Activated CD8-positive, alpha-beta T cell treated with anti-CD3 and anti-CD28 coated beads for 36 hours (primary cell): ENCODE measurements at regions of chr14 and their contacts with region 1.

Region 1: GRCh38 chr14:73728717-73729330 is 14.6 kb upstream of the PNMA1 start:
- DNase-seq: peak; percentile 91
- ATAC-seq: peak; percentile 89
- H3K4me3 Mint-ChIP-seq: no peak overlapping the region
- H3K27ac Mint-ChIP-seq: peak overlapping the region; percentile 75
- H3K4me1 Mint-ChIP-seq: peaks cover 28% of the 10 kb centered on the region
- H3K27me3 Mint-ChIP-seq: no peaks in the 10 kb centered on the region
- CTCF ChIP-seq: peak; percentile 93

Region 2: DNA sequence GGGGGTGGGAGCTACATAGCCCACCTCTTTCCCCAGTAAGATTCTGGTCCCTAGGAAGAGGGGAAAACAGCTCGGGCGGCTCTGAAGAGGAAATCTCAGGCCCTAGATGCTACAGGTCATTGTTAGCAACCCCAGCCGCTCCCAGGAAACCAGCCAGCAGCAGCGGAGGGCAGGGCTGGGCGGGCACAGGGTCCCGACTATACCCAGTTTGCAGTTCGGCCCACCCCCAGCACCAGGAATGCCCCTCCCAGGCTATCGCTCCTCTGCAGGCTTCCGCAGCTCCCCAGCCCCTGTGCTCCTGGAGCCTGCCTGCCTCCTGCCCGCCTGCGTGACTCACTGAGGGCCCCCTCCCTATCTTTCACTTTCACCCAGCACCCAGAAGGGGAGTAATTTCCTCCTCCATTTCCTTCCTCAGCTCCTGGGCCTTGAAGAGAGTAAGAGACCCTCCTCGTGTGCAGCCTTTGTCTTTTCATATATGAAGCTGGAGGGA is 12.6 kb after region 1 on chr14:
- CTCF ChIA-PET with region 1: interaction called, 102 read pairs
- POLR2A ChIA-PET with region 1: interaction called, 25 read pairs
- intact Hi-C with region 1: no loop called
- DNase-seq: peak; percentile 83
- ATAC-seq: peak; percentile 73
- H3K4me3 Mint-ChIP-seq: peak overlapping the region; percentile 74
- H3K27ac Mint-ChIP-seq: peak overlapping the region; percentile 98
- H3K4me1 Mint-ChIP-seq: peaks cover 71% of the 10 kb centered on the region
- H3K27me3 Mint-ChIP-seq: no peaks in the 10 kb centered on the region
- CTCF ChIP-seq: no peak

Region 3: GRCh38 chr14:73771848-73772638 is 43.2 kb after region 1 on chr14:
- CTCF ChIA-PET with region 1: interaction called, 14 read pairs
- POLR2A ChIA-PET with region 1: interaction called, 4 read pairs
- intact Hi-C with region 1: no loop called
- DNase-seq: peak; percentile 96
- ATAC-seq: peak; percentile 81
- H3K4me3 Mint-ChIP-seq: peak overlapping the region; percentile 41
- H3K27ac Mint-ChIP-seq: peak overlapping the region; percentile 92
- H3K4me1 Mint-ChIP-seq: peaks cover 73% of the 10 kb centered on the region
- H3K27me3 Mint-ChIP-seq: no peaks in the 10 kb centered on the region
- CTCF ChIP-seq: no peak

Region 4: DNA sequence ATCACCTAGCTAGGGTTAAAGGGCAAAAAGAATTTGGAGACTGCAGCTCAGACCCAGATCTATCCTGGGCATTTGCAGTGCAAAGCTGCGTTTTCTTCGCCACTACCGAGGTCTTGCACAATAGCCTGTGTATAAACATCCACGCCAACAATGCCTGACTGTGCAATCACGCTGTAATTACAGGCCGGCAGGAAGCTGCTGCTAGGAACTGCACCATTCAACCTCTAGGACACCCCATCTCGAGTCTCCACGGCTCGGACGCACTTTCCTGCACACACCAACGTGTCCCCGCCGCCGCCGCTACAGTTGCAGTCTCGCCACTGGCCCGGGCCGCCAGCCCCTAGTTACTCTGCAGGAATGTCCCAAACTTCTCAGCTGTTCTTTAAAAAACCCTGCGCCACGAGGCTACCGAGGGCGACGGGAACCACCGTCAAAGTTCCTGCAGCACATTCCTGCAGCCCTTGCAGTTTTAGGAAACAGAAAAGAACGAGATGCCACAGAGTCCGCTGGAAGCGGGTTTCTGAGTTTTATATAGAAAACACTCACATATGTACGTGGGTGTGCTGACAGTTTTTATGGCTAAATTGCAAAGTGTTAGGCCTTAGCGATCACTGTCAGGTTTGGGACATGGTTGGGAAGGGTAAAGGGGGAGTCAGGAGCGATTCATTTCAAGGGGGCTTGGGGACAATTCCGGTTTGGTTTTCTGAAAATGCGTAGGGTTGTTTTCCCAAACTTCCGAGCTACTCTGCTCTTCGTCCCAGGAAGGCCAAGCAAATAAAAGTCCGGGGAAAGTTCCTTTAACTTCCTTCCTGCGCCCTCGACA is 57.3 kb after region 1 on chr14:
- CTCF ChIA-PET with region 1: interaction called, 26 read pairs
- POLR2A ChIA-PET with region 1: interaction called, 4 read pairs
- intact Hi-C with region 1: no loop called
- DNase-seq: peak; percentile 81
- ATAC-seq: peak; percentile 54
- H3K4me3 Mint-ChIP-seq: peak overlapping the region; percentile 90
- H3K27ac Mint-ChIP-seq: peak overlapping the region; percentile 95
- H3K4me1 Mint-ChIP-seq: peaks cover 58% of the 10 kb centered on the region
- H3K27me3 Mint-ChIP-seq: no peaks in the 10 kb centered on the region
- CTCF ChIP-seq: peak; percentile 37

Region 5: GRCh38 chr14:73870525-73871235 is 141.9 kb after region 1 on chr14:
- CTCF ChIA-PET with region 1: interaction called, 21 read pairs
- POLR2A ChIA-PET with region 1: interaction called, 3 read pairs
- intact Hi-C with region 1: no loop called
- DNase-seq: no peak
- ATAC-seq: no peak
- H3K4me3 Mint-ChIP-seq: no peak overlapping the region
- H3K27ac Mint-ChIP-seq: no peak overlapping the region
- H3K4me1 Mint-ChIP-seq: no peaks in the 10 kb centered on the region
- H3K27me3 Mint-ChIP-seq: no peaks in the 10 kb centered on the region
- CTCF ChIP-seq: no peak

Region 6: DNA sequence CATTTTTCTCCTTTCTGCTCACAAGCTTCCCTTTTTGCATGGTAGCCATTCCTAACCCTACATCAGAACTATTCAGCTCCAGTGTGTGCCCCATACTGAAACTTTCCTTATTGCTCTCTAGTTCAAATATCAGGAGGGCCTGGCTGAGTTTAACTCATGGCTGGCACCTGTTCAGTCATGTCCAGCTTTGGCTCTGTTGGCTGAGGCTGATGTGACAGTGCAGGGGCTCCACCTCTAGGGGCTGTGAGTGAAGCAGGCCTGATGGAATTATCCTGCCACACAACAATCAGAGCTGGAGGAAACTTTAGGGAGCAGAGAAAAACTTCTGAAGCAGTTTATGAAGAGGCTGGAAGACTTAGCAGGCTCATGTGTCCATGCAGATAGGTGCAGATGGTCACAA is 229.8 kb after region 1 on chr14:
- CTCF ChIA-PET with region 1: no interaction called
- POLR2A ChIA-PET with region 1: no interaction called
- intact Hi-C with region 1: no loop called
- DNase-seq: no peak
- ATAC-seq: no peak
- H3K4me3 Mint-ChIP-seq: no peak overlapping the region
- H3K27ac Mint-ChIP-seq: peak overlapping the region; percentile 28
- H3K4me1 Mint-ChIP-seq: no peaks in the 10 kb centered on the region
- H3K27me3 Mint-ChIP-seq: no peaks in the 10 kb centered on the region
- CTCF ChIP-seq: no peak